Upper lobe of right lung (tissue), 1 donor: ENCODE measurements at regions of chr5 and their contacts with region 1.

Region 1: DNA sequence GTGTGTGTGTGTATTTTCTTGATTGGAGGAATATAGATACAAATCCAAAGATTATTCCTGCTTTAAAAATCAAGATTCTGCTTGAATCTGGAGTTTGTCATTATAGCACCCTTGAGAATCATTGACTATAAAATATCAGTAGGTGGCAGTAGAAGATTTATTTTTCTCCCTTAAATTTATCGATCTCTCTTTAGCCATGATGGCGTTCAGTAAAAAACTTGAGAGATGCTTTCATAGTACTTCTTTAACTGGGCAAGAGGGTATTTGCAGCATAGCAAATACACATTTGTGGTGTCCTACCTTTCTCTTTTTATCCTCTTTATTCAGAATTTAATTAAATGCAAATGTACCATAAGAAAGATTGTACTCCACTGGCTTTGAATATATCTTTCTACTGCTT is 307.7 kb downstream of the ADGRV1 start:
- DNase-seq: no peak
- ATAC-seq: peak; percentile 77
- H3K4me3 ChIP-seq: no peak overlapping the region
- H3K27ac ChIP-seq: no peak overlapping the region
- H3K4me1 ChIP-seq: peaks cover 11% of the 10 kb centered on the region
- H3K27me3 ChIP-seq: no peaks in the 10 kb centered on the region
- CTCF ChIP-seq: peak; percentile 56

Region 2: GRCh38 chr5:90956511-90957097 is 90.3 kb after region 1 on chr5:
- intact Hi-C with region 1: no loop called
- DNase-seq: no peak
- ATAC-seq: peak; percentile 41
- H3K4me3 ChIP-seq: no peak overlapping the region
- H3K27ac ChIP-seq: no peak overlapping the region
- H3K4me1 ChIP-seq: peaks cover 5% of the 10 kb centered on the region
- H3K27me3 ChIP-seq: no peaks in the 10 kb centered on the region
- CTCF ChIP-seq: no peak

Region 3: DNA sequence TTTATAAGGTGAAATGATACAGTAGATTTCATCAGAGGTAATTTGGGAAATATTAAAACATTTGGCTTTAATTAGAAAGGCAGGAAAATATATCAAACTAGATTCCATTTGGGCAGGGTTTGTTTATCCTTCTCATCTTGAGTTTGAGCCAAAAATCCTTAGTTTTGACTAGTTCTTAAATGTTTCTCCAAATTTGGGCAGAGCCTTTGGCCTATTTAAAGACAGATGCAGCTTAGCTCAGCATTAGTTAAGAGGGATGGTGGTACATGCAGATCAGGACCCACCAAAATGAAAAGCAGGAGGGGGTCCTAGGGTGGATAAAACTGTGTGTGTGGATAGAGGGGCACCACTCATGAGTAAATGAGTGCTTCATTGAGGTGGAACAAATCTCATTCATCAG is 537.1 kb after region 1 on chr5:
- intact Hi-C with region 1: loop called (anchors 10 kb)
- DNase-seq: no peak
- ATAC-seq: no peak
- H3K4me3 ChIP-seq: no peak overlapping the region
- H3K27ac ChIP-seq: no peak overlapping the region
- H3K4me1 ChIP-seq: no peaks in the 10 kb centered on the region
- H3K27me3 ChIP-seq: no peaks in the 10 kb centered on the region
- CTCF ChIP-seq: no peak